Activated CD4-positive, alpha-beta memory T cell treated with anti-CD3 and anti-CD28 coated beads for 36 hours (primary cell): ENCODE measurements at regions of chr2 and their contacts with region 1.

Region 1: DNA sequence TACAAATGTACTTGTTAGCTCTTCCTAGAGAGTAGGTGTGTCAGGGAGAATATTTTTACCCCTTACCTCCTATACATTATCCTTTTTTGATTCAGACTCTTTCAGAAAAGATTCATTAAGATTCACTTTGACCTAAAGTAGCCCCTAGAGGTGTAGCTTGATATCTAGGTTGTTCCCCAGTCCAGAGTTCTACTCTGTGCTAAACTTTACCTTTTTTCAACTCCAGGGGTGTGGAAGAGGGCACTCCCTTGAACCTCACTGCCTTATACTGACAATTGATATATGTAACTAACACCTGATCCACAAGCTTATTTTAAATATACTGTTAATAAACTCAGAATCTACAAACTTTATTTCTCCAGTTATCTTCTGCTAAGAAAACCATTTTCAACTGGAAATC is 30.0 kb downstream of the AFTPH start:
- DNase-seq: no peak
- H3K4me3 Mint-ChIP-seq: no peak overlapping the region
- H3K27ac Mint-ChIP-seq: no peak overlapping the region
- H3K4me1 Mint-ChIP-seq: peaks cover 31% of the 10 kb centered on the region
- H3K27me3 Mint-ChIP-seq: no peaks in the 10 kb centered on the region

Region 2: GRCh38 chr2:64538764-64539433 is 15.2 kb before region 1 on chr2:
- CTCF ChIA-PET with region 1: no interaction called
- POLR2A ChIA-PET with region 1: no interaction called
- intact Hi-C with region 1: loop called (anchors 2 kb)
- DNase-seq: peak; percentile 20
- H3K4me3 Mint-ChIP-seq: no peak overlapping the region
- H3K27ac Mint-ChIP-seq: peak overlapping the region; percentile 48
- H3K4me1 Mint-ChIP-seq: peaks cover 76% of the 10 kb centered on the region
- H3K27me3 Mint-ChIP-seq: no peaks in the 10 kb centered on the region

Region 3: GRCh38 chr2:64581018-64581417 is 26.9 kb after region 1 on chr2:
- CTCF ChIA-PET with region 1: no interaction called
- POLR2A ChIA-PET with region 1: no interaction called
- intact Hi-C with region 1: no loop called
- DNase-seq: no peak
- H3K4me3 Mint-ChIP-seq: no peak overlapping the region
- H3K27ac Mint-ChIP-seq: no peak overlapping the region
- H3K4me1 Mint-ChIP-seq: no peaks in the 10 kb centered on the region
- H3K27me3 Mint-ChIP-seq: no peaks in the 10 kb centered on the region